Activated T-helper 1 cell treated with anti-CD3 and anti-CD28 coated beads, Interleukin-12 subunit alpha, Interleukin-12 subunit beta, Interleukin-2, Interleukin-4 antibody, amounts not matched to agents 30 ng/mL and 10 ng/mL and 1 ng/mL, durations not matched to agents 14 hours and 24 hours and 36 hours (primary cell): ENCODE measurements at regions of chr6 and their contacts with region 1.

Region 1: GRCh38 chr6:26312501-26313390 is 52.3 kb upstream of the BTN3A2 start:
- DNase-seq: peak; percentile 72
- H3K4me3 Mint-ChIP-seq: peak overlapping the region; percentile 84
- H3K27ac Mint-ChIP-seq: peak overlapping the region; percentile 92
- H3K4me1 Mint-ChIP-seq: peaks cover 51% of the 10 kb centered on the region
- H3K27me3 Mint-ChIP-seq: no peaks in the 10 kb centered on the region

Region 2: GRCh38 chr6:25156096-25156495 is 1156.7 kb before region 1 on chr6:
- intact Hi-C with region 1: no loop called
- DNase-seq: no peak
- H3K4me3 Mint-ChIP-seq: peak overlapping the region; percentile 16
- H3K27ac Mint-ChIP-seq: peak overlapping the region; percentile 73
- H3K4me1 Mint-ChIP-seq: peaks cover 70% of the 10 kb centered on the region
- H3K27me3 Mint-ChIP-seq: no peaks in the 10 kb centered on the region

Region 3: GRCh38 chr6:25278914-25279747 is 1033.6 kb before region 1 on chr6 and contains the start of gene CARMIL1:
- intact Hi-C with region 1: loop called (anchors 5 kb)
- DNase-seq: peak; percentile 67
- H3K4me3 Mint-ChIP-seq: peak within 1 kb of the TSS; percentile 88
- H3K27ac Mint-ChIP-seq: peak within 1 kb of the TSS; percentile 79
- H3K4me1 Mint-ChIP-seq: peaks cover 30% of the 10 kb centered on the region
- H3K27me3 Mint-ChIP-seq: peaks cover 12% of the 10 kb centered on the region
- total RNA-seq, gene CARMIL1: 1.7 and 1.9 TPM in 2 replicates

Region 4: GRCh38 chr6:26249957-26250697 is 62.6 kb before region 1 on chr6:
- intact Hi-C with region 1: loop called (anchors 2 kb)
- DNase-seq: peak; percentile 68
- H3K4me3 Mint-ChIP-seq: peak overlapping the region; percentile 90
- H3K27ac Mint-ChIP-seq: peak overlapping the region; percentile 99
- H3K4me1 Mint-ChIP-seq: peaks cover 55% of the 10 kb centered on the region
- H3K27me3 Mint-ChIP-seq: peaks cover 2% of the 10 kb centered on the region

Region 5: GRCh38 chr6:26329763-26330511 is 17.2 kb after region 1 on chr6:
- intact Hi-C with region 1: loop called (anchors 1 kb)
- DNase-seq: peak; percentile 48
- H3K4me3 Mint-ChIP-seq: peak overlapping the region; percentile 82
- H3K27ac Mint-ChIP-seq: peak overlapping the region; percentile 93
- H3K4me1 Mint-ChIP-seq: peaks cover 58% of the 10 kb centered on the region
- H3K27me3 Mint-ChIP-seq: peaks cover 23% of the 10 kb centered on the region

Region 6: GRCh38 chr6:26553635-26554446 is 241.1 kb after region 1 on chr6:
- intact Hi-C with region 1: loop called (anchors 1 kb)
- DNase-seq: peak; percentile 72
- H3K4me3 Mint-ChIP-seq: no peak overlapping the region
- H3K27ac Mint-ChIP-seq: no peak overlapping the region
- H3K4me1 Mint-ChIP-seq: peaks cover 18% of the 10 kb centered on the region
- H3K27me3 Mint-ChIP-seq: peaks cover 2% of the 10 kb centered on the region

Region 7: GRCh38 chr6:27388293-27389197 is 1075.8 kb after region 1 on chr6 and contains the start of gene ZNF391:
- intact Hi-C with region 1: no loop called
- DNase-seq: peak; percentile 50
- H3K4me3 Mint-ChIP-seq: peak within 1 kb of the TSS; percentile 90
- H3K27ac Mint-ChIP-seq: peak within 1 kb of the TSS; percentile 66
- H3K4me1 Mint-ChIP-seq: peaks cover 19% of the 10 kb centered on the region
- H3K27me3 Mint-ChIP-seq: peaks cover 7% of the 10 kb centered on the region
- total RNA-seq, gene ZNF391: 0.37 and 0.44 TPM in 2 replicates